Right ventricle myocardium inferior (tissue), 1 donor: ENCODE measurements at regions of chr2 and their contacts with region 1.

Region 1: GRCh38 chr2:127675331-127676261 is at the start of gene LIMS2:
- DNase-seq: peak; percentile 66
- ATAC-seq: peak; percentile 36
- total RNA-seq, gene LIMS2: 260 TPM

Region 2: DNA sequence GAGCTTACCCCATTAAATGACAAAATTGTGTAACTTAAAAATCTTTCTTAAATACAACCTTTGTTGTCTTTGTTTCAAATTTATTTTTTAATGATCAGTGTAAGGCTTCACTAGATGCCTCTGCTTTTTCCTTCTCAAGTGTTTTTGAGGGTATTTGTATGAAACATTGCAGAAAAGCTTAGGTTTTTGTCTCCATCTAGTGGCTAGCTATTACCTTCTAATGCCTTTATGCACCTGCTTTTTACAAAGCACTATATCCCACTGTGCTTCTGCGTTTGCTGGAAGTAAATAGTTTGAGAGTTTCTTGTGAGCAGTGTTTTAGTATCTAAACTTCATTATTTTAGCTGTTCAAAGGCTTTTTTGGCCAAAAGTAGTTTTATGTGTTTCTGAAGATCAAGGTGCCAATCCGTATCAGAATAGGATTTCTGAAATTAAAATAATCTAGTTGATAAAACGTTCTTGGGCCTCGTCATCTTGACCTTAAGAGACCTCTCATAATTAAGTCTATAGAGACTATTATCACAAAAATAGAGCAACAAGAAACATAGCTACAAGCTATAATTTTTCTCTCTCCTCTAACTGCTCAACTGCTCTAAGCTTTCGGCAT is 196.3 kb before region 1 on chr2:
- intact Hi-C with region 1: no loop called
- DNase-seq: no peak
- ATAC-seq: no peak

Region 3: DNA sequence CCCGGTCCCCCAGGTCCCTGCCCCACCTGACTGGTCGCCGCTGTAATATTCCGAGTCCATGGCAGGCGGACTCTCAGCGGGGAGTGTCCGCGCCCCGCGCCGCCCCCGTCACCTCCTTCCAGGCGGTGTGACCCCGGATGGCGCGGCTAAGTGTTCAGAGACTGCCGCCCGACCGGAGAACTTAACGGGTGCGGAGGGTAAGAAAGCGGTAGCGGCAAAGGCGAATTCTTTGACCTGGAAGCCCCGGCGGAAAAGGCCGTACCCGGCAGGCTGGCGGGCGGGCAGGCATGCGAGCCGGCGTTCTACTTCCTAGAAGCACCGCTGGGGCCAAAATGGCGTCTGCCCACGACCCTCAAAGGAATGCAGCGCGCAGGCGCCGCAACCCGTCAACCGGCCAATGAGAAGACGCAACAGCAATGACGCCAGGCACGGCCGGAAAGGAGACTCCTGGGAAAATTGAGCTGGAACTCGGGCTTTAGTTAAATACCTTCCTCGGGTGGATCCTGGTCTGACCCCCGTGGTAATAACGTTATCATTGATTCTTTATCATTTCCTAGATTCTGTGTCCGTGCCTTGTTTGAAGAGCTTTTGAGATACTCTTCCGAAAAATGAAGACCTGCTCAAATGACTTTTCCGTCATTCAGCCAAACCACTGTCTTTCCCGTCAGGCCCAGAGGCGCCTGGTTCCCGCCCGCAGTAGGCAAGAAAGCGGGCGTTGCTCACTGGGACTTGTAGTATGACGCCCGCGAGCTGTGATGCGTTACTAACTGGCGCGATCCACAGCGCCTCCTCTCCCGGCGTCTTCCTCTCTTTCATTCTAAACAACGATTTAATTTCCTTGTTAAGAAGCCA is 149.2 kb before region 1 on chr2 and contains the start of gene IWS1:
- intact Hi-C with region 1: loop called (anchors 10 kb)
- DNase-seq: peak; percentile 97
- ATAC-seq: peak; percentile 98
- total RNA-seq, gene IWS1: 53.0 TPM

Region 4: GRCh38 chr2:127637725-127638252 is 37.8 kb before region 1 on chr2:
- intact Hi-C with region 1: loop called (anchors 5 kb)
- DNase-seq: no peak
- ATAC-seq: peak; percentile 9

Region 5: DNA sequence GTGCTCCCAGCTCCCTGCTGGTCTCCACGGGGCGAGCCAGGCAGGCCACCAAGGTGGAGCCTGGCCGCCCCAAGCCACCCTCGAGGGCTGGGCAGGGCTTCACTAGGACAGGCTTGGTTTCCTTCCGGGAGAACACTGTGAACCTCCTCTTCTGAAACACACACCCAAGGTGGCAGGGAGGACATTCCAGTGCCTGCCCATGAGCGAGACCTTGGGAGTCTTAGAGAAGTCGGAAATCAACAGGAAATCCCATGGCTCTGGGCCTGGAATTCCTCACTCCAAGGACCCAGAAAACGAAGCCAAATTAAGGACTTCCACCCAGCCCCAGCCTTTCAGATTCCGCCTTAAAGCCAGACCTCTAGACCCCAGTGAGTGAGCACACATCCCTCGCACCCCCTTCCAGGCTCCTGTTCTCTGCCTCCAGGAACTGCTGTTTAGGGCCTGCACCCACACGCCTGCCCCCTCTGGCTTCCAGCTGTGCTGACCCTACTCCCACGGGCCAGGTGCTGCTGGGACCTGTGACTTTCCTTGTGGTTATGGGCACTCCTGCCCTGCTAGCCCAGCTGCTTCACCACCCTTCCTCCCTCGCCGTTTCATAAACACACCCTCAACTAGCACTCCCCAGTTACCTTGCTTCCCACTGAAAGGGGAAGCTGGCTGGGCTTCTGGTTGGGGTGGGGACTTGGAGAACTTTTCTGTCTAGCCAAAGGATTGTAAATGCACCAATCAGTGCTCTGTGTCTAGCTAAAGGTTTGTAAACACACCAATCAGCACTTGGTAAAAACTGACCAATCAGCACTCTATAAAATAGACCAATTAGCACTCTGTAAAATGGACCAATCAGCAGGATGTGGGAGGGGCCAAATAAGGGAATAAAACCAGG is 15.9 kb before region 1 on chr2:
- intact Hi-C with region 1: loop called (anchors 2 kb)
- DNase-seq: peak; percentile 64
- ATAC-seq: peak; percentile 24

Region 6: DNA sequence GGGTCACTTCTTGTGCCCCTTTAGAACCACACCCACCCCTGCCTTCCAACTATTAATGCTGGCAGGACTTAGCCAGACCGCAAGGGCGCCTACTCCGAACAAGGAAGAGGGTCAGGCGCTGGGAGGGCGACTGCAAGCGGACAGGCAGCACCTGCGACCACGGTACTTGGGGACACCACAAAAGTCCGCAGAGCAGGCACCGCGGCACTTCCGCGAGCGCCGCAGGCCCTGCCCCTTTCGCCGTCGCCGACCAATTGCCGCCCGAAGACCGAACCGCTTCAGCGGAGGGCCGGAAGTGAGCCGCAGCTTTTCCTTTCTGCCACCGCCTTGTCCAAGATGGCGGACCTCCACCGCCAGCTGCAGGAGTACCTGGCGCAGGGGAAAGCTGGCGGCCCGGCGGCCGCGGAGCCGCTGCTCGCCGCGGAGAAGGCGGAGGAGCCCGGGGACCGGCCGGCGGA is 25.6 kb after region 1 on chr2 and contains the start of gene SFT2D3:
- intact Hi-C with region 1: loop called (anchors 2 kb)
- DNase-seq: peak; percentile 96
- ATAC-seq: peak; percentile 92
- total RNA-seq, gene SFT2D3: 3.1 TPM